B cell (primary cell): ENCODE measurements at regions of chr5 and their contacts with region 1.

Region 1: GRCh38 chr5:55936100-55936693 is 58.6 kb downstream of the IL6ST start:
- DNase-seq: peak; percentile 83
- ATAC-seq: peak; percentile 89
- H3K4me3 ChIP-seq: no peak overlapping the region
- H3K4me3 Mint-ChIP-seq: no peak overlapping the region
- H3K27ac ChIP-seq: no peak overlapping the region
- H3K27ac Mint-ChIP-seq: no peak overlapping the region
- H3K4me1 ChIP-seq: no peaks in the 10 kb centered on the region
- H3K4me1 Mint-ChIP-seq: no peaks in the 10 kb centered on the region
- H3K27me3 ChIP-seq: no peaks in the 10 kb centered on the region
- H3K27me3 Mint-ChIP-seq: no peaks in the 10 kb centered on the region
- CTCF ChIP-seq: peak; percentile 92

Region 2: DNA sequence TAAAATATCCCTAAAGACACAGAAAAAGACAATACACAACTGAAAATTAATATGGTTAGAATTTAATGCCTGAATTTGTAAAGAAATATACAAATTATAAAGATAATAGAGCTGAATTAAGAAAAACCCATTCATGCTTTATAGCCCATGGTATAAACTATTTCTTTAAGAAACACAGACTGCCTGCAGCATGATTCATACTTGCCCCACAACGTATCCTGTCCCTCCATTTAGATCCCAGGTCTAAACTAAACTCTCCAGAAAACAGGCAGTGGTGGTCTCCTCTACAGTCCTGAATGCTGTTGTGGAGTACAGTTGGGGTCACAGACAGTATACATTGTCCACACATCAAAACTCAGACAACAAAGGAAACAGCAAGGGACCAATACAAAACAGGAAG is 33.8 kb after region 1 on chr5:
- CTCF ChIA-PET with region 1: interaction called, 11 read pairs
- POLR2A ChIA-PET with region 1: no interaction called
- intact Hi-C with region 1: no loop called
- DNase-seq: no peak
- ATAC-seq: no peak
- H3K4me3 ChIP-seq: no peak overlapping the region
- H3K4me3 Mint-ChIP-seq: no peak overlapping the region
- H3K27ac ChIP-seq: no peak overlapping the region
- H3K27ac Mint-ChIP-seq: no peak overlapping the region
- H3K4me1 ChIP-seq: no peaks in the 10 kb centered on the region
- H3K4me1 Mint-ChIP-seq: no peaks in the 10 kb centered on the region
- H3K27me3 ChIP-seq: no peaks in the 10 kb centered on the region
- H3K27me3 Mint-ChIP-seq: no peaks in the 10 kb centered on the region
- CTCF ChIP-seq: no peak

Region 3: GRCh38 chr5:56200856-56201666 is 264.9 kb after region 1 on chr5:
- CTCF ChIA-PET with region 1: interaction called, 111 read pairs
- POLR2A ChIA-PET with region 1: no interaction called
- intact Hi-C with region 1: no loop called
- DNase-seq: peak; percentile 55
- ATAC-seq: peak; percentile 86
- H3K4me3 ChIP-seq: no peak overlapping the region
- H3K4me3 Mint-ChIP-seq: no peak overlapping the region
- H3K27ac ChIP-seq: no peak overlapping the region
- H3K27ac Mint-ChIP-seq: no peak overlapping the region
- H3K4me1 ChIP-seq: no peaks in the 10 kb centered on the region
- H3K4me1 Mint-ChIP-seq: no peaks in the 10 kb centered on the region
- H3K27me3 ChIP-seq: no peaks in the 10 kb centered on the region
- H3K27me3 Mint-ChIP-seq: no peaks in the 10 kb centered on the region
- CTCF ChIP-seq: peak; percentile 43

Region 4: GRCh38 chr5:56206126-56206910 is 270.1 kb after region 1 on chr5:
- CTCF ChIA-PET with region 1: interaction called, 111 read pairs
- POLR2A ChIA-PET with region 1: no interaction called
- intact Hi-C with region 1: no loop called
- DNase-seq: no peak
- ATAC-seq: no peak
- H3K4me3 ChIP-seq: no peak overlapping the region
- H3K4me3 Mint-ChIP-seq: no peak overlapping the region
- H3K27ac ChIP-seq: no peak overlapping the region
- H3K27ac Mint-ChIP-seq: no peak overlapping the region
- H3K4me1 ChIP-seq: no peaks in the 10 kb centered on the region
- H3K4me1 Mint-ChIP-seq: no peaks in the 10 kb centered on the region
- H3K27me3 ChIP-seq: no peaks in the 10 kb centered on the region
- H3K27me3 Mint-ChIP-seq: peaks cover 4% of the 10 kb centered on the region
- CTCF ChIP-seq: no peak

Region 5: GRCh38 chr5:56264417-56265025 is 328.3 kb after region 1 on chr5:
- CTCF ChIA-PET with region 1: interaction called, 36 read pairs
- POLR2A ChIA-PET with region 1: no interaction called
- intact Hi-C with region 1: loop called (anchors 1 kb)
- DNase-seq: peak; percentile 57
- ATAC-seq: peak; percentile 80
- H3K4me3 ChIP-seq: no peak overlapping the region
- H3K4me3 Mint-ChIP-seq: no peak overlapping the region
- H3K27ac ChIP-seq: no peak overlapping the region
- H3K27ac Mint-ChIP-seq: no peak overlapping the region
- H3K4me1 ChIP-seq: peaks cover 2 to 3% of the 10 kb centered on the region in 2 donors
- H3K4me1 Mint-ChIP-seq: peaks cover 2% of the 10 kb centered on the region
- H3K27me3 ChIP-seq: no peaks in the 10 kb centered on the region
- H3K27me3 Mint-ChIP-seq: peaks cover 5% of the 10 kb centered on the region
- CTCF ChIP-seq: peak; percentile 73

Region 6: GRCh38 chr5:56588636-56589480 is 652.7 kb after region 1 on chr5:
- CTCF ChIA-PET with region 1: no interaction called
- POLR2A ChIA-PET with region 1: no interaction called
- intact Hi-C with region 1: no loop called
- DNase-seq: peak; percentile 98
- ATAC-seq: peak; percentile 85
- H3K4me3 ChIP-seq: peak overlapping the region in 3 of 5 experiments; percentile 22 to 41 (median 25)
- H3K4me3 Mint-ChIP-seq: peak overlapping the region; percentile 59
- H3K27ac ChIP-seq: peak overlapping the region; percentile 99 to 100
- H3K27ac Mint-ChIP-seq: peak overlapping the region; percentile 96
- H3K4me1 ChIP-seq: peaks cover 63 to 67% of the 10 kb centered on the region in 2 donors
- H3K4me1 Mint-ChIP-seq: peaks cover 77% of the 10 kb centered on the region
- H3K27me3 ChIP-seq: no peaks in the 10 kb centered on the region
- H3K27me3 Mint-ChIP-seq: no peaks in the 10 kb centered on the region
- CTCF ChIP-seq: no peak

Region 7: GRCh38 chr5:57221049-57221568 is 1284.9 kb after region 1 on chr5:
- CTCF ChIA-PET with region 1: interaction called, 3 read pairs
- POLR2A ChIA-PET with region 1: no interaction called
- intact Hi-C with region 1: loop called (anchors 2 kb)
- DNase-seq: peak; percentile 82
- ATAC-seq: peak; percentile 65
- H3K4me3 ChIP-seq: no peak overlapping the region
- H3K4me3 Mint-ChIP-seq: peak overlapping the region; percentile 17
- H3K27ac ChIP-seq: peak overlapping the region in 1 of 2 donors; percentile 75
- H3K27ac Mint-ChIP-seq: peak overlapping the region; percentile 21
- H3K4me1 ChIP-seq: peaks cover 3 to 4% of the 10 kb centered on the region in 2 donors
- H3K4me1 Mint-ChIP-seq: peaks cover 33% of the 10 kb centered on the region
- H3K27me3 ChIP-seq: no peaks in the 10 kb centered on the region
- H3K27me3 Mint-ChIP-seq: no peaks in the 10 kb centered on the region
- CTCF ChIP-seq: peak; percentile 96